Endothelial cell of umbilical vein (primary cell): ENCODE measurements at regions of chr10 and their contacts with region 1.

Region 1: GRCh38 chr10:110446954-110447608 is 50.6 kb upstream of the DUSP5 start:
- DNase-seq: peak; percentile 87
- H3K4me3 ChIP-seq: no peak overlapping the region
- H3K27ac ChIP-seq: peak overlapping the region; percentile 74
- H3K4me1 ChIP-seq: peaks cover 17% of the 10 kb centered on the region
- H3K27me3 ChIP-seq: no peaks in the 10 kb centered on the region
- CTCF ChIP-seq: no peak
- POLR2A ChIP-seq: no peak

Region 2: GRCh38 chr10:110414563-110415309 is 32.3 kb before region 1 on chr10:
- CTCF ChIA-PET with region 1: no interaction called
- POLR2A ChIA-PET with region 1: no interaction called
- dilution Hi-C with region 1: no loop called
- intact Hi-C with region 1: loop called (anchors 1 kb)
- DNase-seq: no peak
- H3K4me3 ChIP-seq: no peak overlapping the region
- H3K27ac ChIP-seq: peak overlapping the region; percentile 8
- H3K4me1 ChIP-seq: peaks cover 39% of the 10 kb centered on the region
- H3K27me3 ChIP-seq: no peaks in the 10 kb centered on the region
- CTCF ChIP-seq: no peak
- POLR2A ChIP-seq: no peak

Region 3: GRCh38 chr10:110425684-110426293 is 21.3 kb before region 1 on chr10:
- CTCF ChIA-PET with region 1: interaction called, 3 read pairs
- POLR2A ChIA-PET with region 1: no interaction called
- dilution Hi-C with region 1: no loop called
- intact Hi-C with region 1: loop called (anchors 1 kb)
- DNase-seq: no peak
- H3K4me3 ChIP-seq: no peak overlapping the region
- H3K27ac ChIP-seq: no peak overlapping the region
- H3K4me1 ChIP-seq: no peaks in the 10 kb centered on the region
- H3K27me3 ChIP-seq: no peaks in the 10 kb centered on the region
- CTCF ChIP-seq: no peak
- POLR2A ChIP-seq: no peak

Region 4: DNA sequence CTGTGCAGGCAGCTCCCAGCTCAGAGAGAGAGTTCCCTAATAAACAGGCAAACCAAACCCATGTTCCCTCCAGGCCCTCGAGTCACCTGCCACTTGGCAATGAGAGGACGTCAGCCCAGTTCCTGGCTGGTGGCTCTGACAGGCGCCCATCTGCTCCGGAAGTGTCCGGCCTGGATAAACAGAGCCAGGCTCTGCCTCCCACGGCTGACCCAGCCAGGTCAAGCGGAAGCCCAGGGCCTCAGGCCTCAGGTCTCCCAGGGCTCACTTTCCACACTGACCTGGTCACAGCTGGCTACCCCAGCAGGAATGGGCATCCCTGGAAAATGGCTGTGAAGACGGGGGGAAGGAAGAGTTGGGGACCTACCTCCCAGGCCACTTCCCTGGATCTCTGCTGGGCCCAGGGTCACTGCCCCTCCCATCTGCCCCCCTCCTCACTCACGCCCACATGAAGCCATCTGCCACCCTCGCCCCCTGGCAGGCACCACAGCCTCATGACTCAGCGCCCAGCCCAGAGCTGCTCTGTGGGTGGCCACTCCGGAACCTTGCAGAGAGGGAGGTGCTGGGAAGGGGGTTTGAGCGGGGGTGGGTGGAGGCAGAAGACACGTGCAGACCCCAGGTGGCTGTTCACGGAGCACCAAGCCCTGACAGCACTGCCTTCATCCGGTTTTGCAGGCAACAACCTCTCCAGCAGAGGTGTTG is 13.2 kb after region 1 on chr10:
- CTCF ChIA-PET with region 1: interaction called, 6 read pairs
- POLR2A ChIA-PET with region 1: no interaction called
- dilution Hi-C with region 1: no loop called
- intact Hi-C with region 1: loop called (anchors 2 kb)
- DNase-seq: peak; percentile 55
- H3K4me3 ChIP-seq: no peak overlapping the region
- H3K27ac ChIP-seq: peak overlapping the region; percentile 66
- H3K4me1 ChIP-seq: peaks cover 29% of the 10 kb centered on the region
- H3K27me3 ChIP-seq: no peaks in the 10 kb centered on the region
- CTCF ChIP-seq: no peak
- POLR2A ChIP-seq: no peak